Caco-2 (cell line): ENCODE measurements at regions of chr5 and their contacts with region 1.

Region 1: DNA sequence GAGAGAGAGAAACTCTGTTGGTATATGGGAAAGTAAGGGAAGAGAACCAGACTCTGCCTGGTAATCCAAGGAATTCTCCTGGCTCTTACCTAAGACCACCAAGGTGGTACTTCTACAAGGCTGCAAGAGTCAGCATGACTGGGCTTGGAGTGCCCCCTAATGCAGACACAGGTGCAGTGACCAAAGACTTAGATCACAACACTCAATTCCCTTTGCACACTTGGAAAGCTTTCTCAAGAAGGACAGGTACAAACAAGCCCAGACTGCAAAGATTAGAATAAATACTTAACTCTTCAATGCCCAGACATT is 25.2 kb downstream of the UGT3A2 start:
- DNase-seq: no peak
- H3K4me3 ChIP-seq: no peak overlapping the region
- H3K4me3 Mint-ChIP-seq: no peak overlapping the region
- H3K27ac Mint-ChIP-seq: peak overlapping the region; percentile 8
- H3K4me1 ChIP-seq: no peaks in the 10 kb centered on the region; the same call in none of the 2 replicates
- H3K4me1 Mint-ChIP-seq: peaks cover 7% of the 10 kb centered on the region
- H3K27me3 ChIP-seq: no peaks in the 10 kb centered on the region
- H3K27me3 Mint-ChIP-seq: peaks cover 4% of the 10 kb centered on the region
- CTCF ChIP-seq: peak in 1 of 2 experiments; percentile 33

Region 2: DNA sequence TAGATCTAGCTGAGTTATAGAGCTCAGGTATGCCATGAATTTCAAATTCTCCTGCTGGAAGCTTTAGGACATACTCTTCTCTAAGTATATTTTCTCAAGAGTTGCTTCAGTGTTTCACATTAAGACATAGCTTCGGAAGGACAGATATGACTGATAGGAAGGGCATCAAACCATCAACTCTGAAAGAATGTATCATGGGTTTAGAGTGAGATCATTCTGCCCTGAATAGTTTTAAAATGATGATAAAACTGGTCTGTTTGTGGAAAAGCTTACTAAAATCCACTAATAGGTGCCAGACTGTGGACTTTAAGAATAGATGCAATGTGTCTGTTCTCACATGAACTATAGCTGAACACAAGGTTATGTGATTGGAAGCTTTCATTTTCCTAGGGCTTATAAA is 415.4 kb before region 1 on chr5:
- CTCF ChIA-PET with region 1: no interaction called
- POLR2A ChIA-PET with region 1: no interaction called
- intact Hi-C with region 1: no loop called
- DNase-seq: no peak
- H3K4me3 ChIP-seq: no peak overlapping the region
- H3K4me3 Mint-ChIP-seq: no peak overlapping the region
- H3K27ac Mint-ChIP-seq: no peak overlapping the region
- H3K4me1 ChIP-seq: no peaks in the 10 kb centered on the region
- H3K4me1 Mint-ChIP-seq: no peaks in the 10 kb centered on the region
- H3K27me3 ChIP-seq: no peaks in the 10 kb centered on the region
- H3K27me3 Mint-ChIP-seq: peaks cover 2% of the 10 kb centered on the region
- CTCF ChIP-seq: no peak

Region 3: GRCh38 chr5:35651002-35651756 is 390.3 kb before region 1 on chr5:
- CTCF ChIA-PET with region 1: no interaction called
- POLR2A ChIA-PET with region 1: no interaction called
- intact Hi-C with region 1: loop called (anchors 5 kb)
- DNase-seq: peak; percentile 45 to 49
- H3K4me3 ChIP-seq: no peak overlapping the region
- H3K4me3 Mint-ChIP-seq: no peak overlapping the region
- H3K27ac Mint-ChIP-seq: no peak overlapping the region
- H3K4me1 ChIP-seq: no peaks in the 10 kb centered on the region
- H3K4me1 Mint-ChIP-seq: no peaks in the 10 kb centered on the region
- H3K27me3 ChIP-seq: no peaks in the 10 kb centered on the region
- H3K27me3 Mint-ChIP-seq: peaks cover 3% of the 10 kb centered on the region
- CTCF ChIP-seq: peak; percentile 39 to 71

Region 4: DNA sequence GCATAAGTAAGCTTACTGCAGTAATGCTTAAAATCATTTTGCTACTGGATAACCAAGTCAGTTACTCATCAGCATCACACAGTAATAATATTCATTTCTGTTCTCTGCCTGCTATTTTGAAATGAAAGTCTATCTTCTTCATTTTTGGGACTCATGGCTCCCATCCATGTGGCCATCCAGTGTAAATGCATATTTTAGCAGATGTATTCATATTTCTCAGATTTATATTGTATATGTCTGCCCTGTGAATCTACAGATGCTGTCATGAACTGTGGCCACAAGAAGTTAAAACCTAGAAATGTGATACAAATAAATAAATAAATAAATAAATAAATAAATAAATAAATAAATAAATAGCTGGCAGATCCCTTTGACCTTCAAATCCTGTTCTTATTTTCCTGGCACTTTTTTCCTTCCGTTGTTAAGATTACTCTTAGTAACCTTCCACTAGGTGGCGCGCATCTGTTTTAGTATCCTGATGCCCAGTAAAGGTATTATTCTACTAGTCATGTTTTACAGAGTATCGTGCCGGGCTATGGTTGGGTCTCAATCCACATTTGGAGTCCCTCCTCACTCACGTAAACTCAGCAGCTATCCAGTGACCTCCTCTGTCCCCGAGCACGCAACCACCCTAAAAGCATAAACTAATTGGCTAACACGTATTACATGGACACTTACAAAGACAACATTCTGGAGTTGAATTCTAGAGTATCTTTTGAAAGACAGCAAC is 264.0 kb before region 1 on chr5:
- CTCF ChIA-PET with region 1: no interaction called
- POLR2A ChIA-PET with region 1: no interaction called
- intact Hi-C with region 1: loop called (anchors 1 kb)
- DNase-seq: peak; percentile 67 to 70
- H3K4me3 ChIP-seq: no peak overlapping the region
- H3K4me3 Mint-ChIP-seq: no peak overlapping the region
- H3K27ac Mint-ChIP-seq: no peak overlapping the region
- H3K4me1 ChIP-seq: no peaks in the 10 kb centered on the region
- H3K4me1 Mint-ChIP-seq: no peaks in the 10 kb centered on the region
- H3K27me3 ChIP-seq: no peaks in the 10 kb centered on the region; the same call in none of the 2 replicates
- H3K27me3 Mint-ChIP-seq: peaks cover 6% of the 10 kb centered on the region
- CTCF ChIP-seq: peak; percentile 56 to 69

Region 5: DNA sequence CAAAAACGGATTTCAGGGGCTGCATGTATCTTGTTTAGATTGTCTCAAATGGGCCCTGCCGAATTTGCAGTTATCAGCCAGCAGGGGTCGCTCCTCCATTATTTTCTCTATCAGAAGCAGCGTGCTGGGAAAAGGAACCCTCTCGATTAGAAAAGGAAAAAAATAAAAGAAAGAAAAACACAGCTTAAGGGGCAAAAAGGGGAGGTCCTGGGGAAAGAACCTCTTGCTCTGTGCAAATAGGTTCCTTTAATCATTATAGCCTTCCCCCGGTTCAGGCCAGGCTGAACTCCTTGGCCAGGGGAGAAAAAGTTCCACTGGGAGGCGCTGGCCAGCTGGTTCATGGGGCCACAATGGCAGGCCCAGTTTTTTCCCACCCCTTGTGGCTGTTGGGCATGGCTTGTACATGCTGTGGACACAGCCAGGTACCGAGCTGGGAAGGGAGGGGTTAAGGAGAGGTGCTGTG is 78.1 kb before region 1 on chr5:
- CTCF ChIA-PET with region 1: no interaction called
- POLR2A ChIA-PET with region 1: no interaction called
- intact Hi-C with region 1: loop called (anchors 1 kb)
- DNase-seq: peak in 1 of 2 experiments; percentile 4
- H3K4me3 ChIP-seq: no peak overlapping the region
- H3K4me3 Mint-ChIP-seq: no peak overlapping the region
- H3K27ac Mint-ChIP-seq: no peak overlapping the region
- H3K4me1 ChIP-seq: no peaks in the 10 kb centered on the region
- H3K4me1 Mint-ChIP-seq: no peaks in the 10 kb centered on the region
- H3K27me3 ChIP-seq: no peaks in the 10 kb centered on the region; the same call in 1 of the 2 replicates
- H3K27me3 Mint-ChIP-seq: peaks cover 7% of the 10 kb centered on the region
- CTCF ChIP-seq: peak; percentile 41 to 47

Region 6: DNA sequence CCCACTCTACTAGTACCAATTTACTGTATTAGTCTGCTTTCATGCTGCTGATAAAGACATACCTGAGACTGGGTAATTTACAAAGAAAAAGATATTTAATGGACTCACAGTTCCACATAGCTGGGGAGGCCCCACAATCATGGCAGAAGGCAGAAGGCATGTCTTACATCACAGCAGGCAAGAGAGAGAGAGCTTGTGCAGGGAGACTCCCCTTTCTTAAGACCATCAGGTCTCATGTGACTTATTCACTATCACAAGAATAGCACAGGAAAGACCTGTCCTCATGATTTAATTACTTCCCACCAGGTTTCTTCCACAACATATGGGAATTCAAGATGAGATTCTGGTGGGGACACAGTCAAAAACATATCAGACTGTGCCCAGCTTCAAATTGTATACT is 61.8 kb before region 1 on chr5:
- CTCF ChIA-PET with region 1: no interaction called
- POLR2A ChIA-PET with region 1: no interaction called
- intact Hi-C with region 1: no loop called
- DNase-seq: no peak
- H3K4me3 ChIP-seq: no peak overlapping the region
- H3K4me3 Mint-ChIP-seq: no peak overlapping the region
- H3K27ac Mint-ChIP-seq: no peak overlapping the region
- H3K4me1 ChIP-seq: no peaks in the 10 kb centered on the region
- H3K4me1 Mint-ChIP-seq: no peaks in the 10 kb centered on the region
- H3K27me3 ChIP-seq: no peaks in the 10 kb centered on the region
- H3K27me3 Mint-ChIP-seq: peaks cover 5% of the 10 kb centered on the region
- CTCF ChIP-seq: no peak

Region 7: GRCh38 chr5:36089989-36090564 is 48.6 kb after region 1 on chr5:
- CTCF ChIA-PET with region 1: no interaction called
- POLR2A ChIA-PET with region 1: no interaction called
- intact Hi-C with region 1: no loop called
- DNase-seq: peak in 1 of 2 experiments; percentile 16
- H3K4me3 ChIP-seq: no peak overlapping the region
- H3K4me3 Mint-ChIP-seq: no peak overlapping the region
- H3K27ac Mint-ChIP-seq: no peak overlapping the region
- H3K4me1 ChIP-seq: no peaks in the 10 kb centered on the region
- H3K4me1 Mint-ChIP-seq: no peaks in the 10 kb centered on the region
- H3K27me3 ChIP-seq: no peaks in the 10 kb centered on the region
- H3K27me3 Mint-ChIP-seq: no peaks in the 10 kb centered on the region
- CTCF ChIP-seq: peak in 1 of 2 experiments; percentile 17